ENCODE measurements at regions of chr11 and their contacts with region 1.

Region 1: GRCh38 chr11:72793425-72794367 is at the start of gene STARD10:
- DNase-seq: peak; percentile 98
- ATAC-seq: peak; percentile 94
- H3K4me3 ChIP-seq: peak within 1 kb of the TSS; percentile 60 to 98 (median 85)
- H3K4me3 Mint-ChIP-seq: peak within 1 kb of the TSS; percentile 99
- H3K27ac ChIP-seq: peak within 1 kb of the TSS; percentile 94 to 97
- H3K27ac Mint-ChIP-seq: peak within 1 kb of the TSS; percentile 100
- H3K4me1 ChIP-seq: peaks cover 19 to 28% of the 10 kb centered on the region in 2 donors
- H3K4me1 Mint-ChIP-seq: peaks cover 36% of the 10 kb centered on the region
- H3K27me3 ChIP-seq: no peaks in the 10 kb centered on the region
- H3K27me3 Mint-ChIP-seq: no peaks in the 10 kb centered on the region
- CTCF ChIP-seq: peak; percentile 94
- total RNA-seq, gene STARD10: 29.4 and 39.2 TPM in 2 replicates

Region 2: GRCh38 chr11:71934213-71934612 is 859.5 kb before region 1 on chr11:
- CTCF ChIA-PET with region 1: no interaction called
- POLR2A ChIA-PET with region 1: no interaction called
- intact Hi-C with region 1: no loop called
- DNase-seq: peak; percentile 76
- ATAC-seq: peak; percentile 84
- H3K4me3 ChIP-seq: no peak overlapping the region
- H3K4me3 Mint-ChIP-seq: peak overlapping the region; percentile 68
- H3K27ac ChIP-seq: peak overlapping the region; percentile 21 to 73
- H3K27ac Mint-ChIP-seq: peak overlapping the region; percentile 75
- H3K4me1 ChIP-seq: peaks cover 33 to 44% of the 10 kb centered on the region in 2 donors
- H3K4me1 Mint-ChIP-seq: peaks cover 53% of the 10 kb centered on the region
- H3K27me3 ChIP-seq: no peaks in the 10 kb centered on the region
- H3K27me3 Mint-ChIP-seq: no peaks in the 10 kb centered on the region
- CTCF ChIP-seq: no peak

Region 3: DNA sequence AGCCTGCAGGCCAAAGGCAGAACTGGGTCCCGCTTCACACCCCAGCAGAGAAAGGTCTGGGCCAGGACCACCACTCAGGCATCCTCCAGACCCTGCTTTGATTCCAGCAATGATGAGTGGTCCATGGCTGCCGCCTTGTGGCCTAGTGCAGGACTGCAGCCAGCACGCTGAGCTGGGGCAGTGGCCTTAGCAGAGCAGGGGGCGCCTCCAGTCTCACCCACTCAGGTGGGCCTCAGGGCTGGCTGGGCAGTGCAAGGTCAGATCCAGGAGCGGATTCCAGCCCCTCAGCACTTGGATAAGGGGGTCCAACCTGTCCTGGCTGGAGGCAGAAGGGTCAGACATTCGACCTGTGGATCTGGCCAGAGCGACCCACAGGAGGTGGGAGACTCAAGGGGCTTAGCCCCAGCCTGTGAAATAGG is 109.9 kb before region 1 on chr11:
- CTCF ChIA-PET with region 1: interaction called, 39 read pairs
- POLR2A ChIA-PET with region 1: no interaction called
- intact Hi-C with region 1: loop called (anchors 1 kb)
- DNase-seq: peak; percentile 76
- ATAC-seq: peak; percentile 74
- H3K4me3 ChIP-seq: no peak overlapping the region
- H3K4me3 Mint-ChIP-seq: no peak overlapping the region
- H3K27ac ChIP-seq: peak overlapping the region in 1 of 2 donors; percentile 11
- H3K27ac Mint-ChIP-seq: no peak overlapping the region
- H3K4me1 ChIP-seq: no peaks in the 10 kb centered on the region
- H3K4me1 Mint-ChIP-seq: peaks cover 6% of the 10 kb centered on the region
- H3K27me3 ChIP-seq: no peaks in the 10 kb centered on the region
- H3K27me3 Mint-ChIP-seq: no peaks in the 10 kb centered on the region
- CTCF ChIP-seq: peak; percentile 95

Region 4: DNA sequence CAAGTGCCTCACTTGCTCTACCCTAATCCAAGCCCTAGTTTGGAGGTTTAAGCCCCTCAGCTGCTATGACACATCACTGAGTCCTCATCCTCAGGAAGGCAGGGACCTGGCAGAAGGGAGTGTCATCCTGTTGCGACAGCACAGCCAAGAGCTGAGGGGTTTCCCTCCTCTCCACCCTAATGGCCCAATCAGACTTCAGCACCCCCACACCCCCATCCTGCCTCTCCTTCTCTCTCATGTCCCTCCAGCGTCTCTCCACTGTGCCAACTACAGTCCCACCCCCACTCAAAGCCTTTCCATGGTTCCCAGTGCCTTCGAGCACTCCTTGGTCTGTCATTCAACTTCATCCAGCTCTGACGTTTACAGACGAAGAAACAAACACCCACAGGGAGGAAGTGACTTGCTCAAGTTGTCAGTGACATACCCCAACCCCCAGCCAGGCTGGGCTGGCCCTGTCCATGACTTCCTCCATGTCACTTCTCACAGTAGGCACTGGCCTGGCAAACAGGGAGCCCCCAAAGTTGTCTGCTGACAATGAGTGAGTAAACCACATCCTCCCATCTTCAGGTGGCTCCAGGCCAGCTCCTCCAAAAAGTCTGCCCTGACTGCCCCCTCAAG is 57.1 kb before region 1 on chr11:
- CTCF ChIA-PET with region 1: interaction called, 390 read pairs
- POLR2A ChIA-PET with region 1: interaction called, 4 read pairs
- intact Hi-C with region 1: loop called (anchors 1 kb)
- DNase-seq: peak; percentile 87
- ATAC-seq: peak; percentile 42
- H3K4me3 ChIP-seq: peak overlapping the region in 4 of 5 experiments; percentile 13 to 67 (median 42)
- H3K4me3 Mint-ChIP-seq: peak overlapping the region; percentile 86
- H3K27ac ChIP-seq: peak overlapping the region; percentile 97 to 99
- H3K27ac Mint-ChIP-seq: peak overlapping the region; percentile 99
- H3K4me1 ChIP-seq: peaks cover 76 to 87% of the 10 kb centered on the region in 2 donors
- H3K4me1 Mint-ChIP-seq: peaks cover 83% of the 10 kb centered on the region
- H3K27me3 ChIP-seq: no peaks in the 10 kb centered on the region
- H3K27me3 Mint-ChIP-seq: no peaks in the 10 kb centered on the region
- CTCF ChIP-seq: no peak

Region 5: GRCh38 chr11:72752088-72752914 is 41.4 kb before region 1 on chr11 and contains the start of gene ARAP1:
- CTCF ChIA-PET with region 1: interaction called, 4 read pairs
- POLR2A ChIA-PET with region 1: interaction called, 4 read pairs
- intact Hi-C with region 1: loop called (anchors 1 kb)
- DNase-seq: peak; percentile 87
- ATAC-seq: peak; percentile 91
- H3K4me3 ChIP-seq: peak within 1 kb of the TSS; percentile 63 to 93 (median 82)
- H3K4me3 Mint-ChIP-seq: peak within 1 kb of the TSS; percentile 99
- H3K27ac ChIP-seq: peak within 1 kb of the TSS; percentile 65 to 79
- H3K27ac Mint-ChIP-seq: peak within 1 kb of the TSS; percentile 96
- H3K4me1 ChIP-seq: peaks cover 42 to 53% of the 10 kb centered on the region in 2 donors
- H3K4me1 Mint-ChIP-seq: peaks cover 45% of the 10 kb centered on the region
- H3K27me3 ChIP-seq: no peaks in the 10 kb centered on the region
- H3K27me3 Mint-ChIP-seq: no peaks in the 10 kb centered on the region
- CTCF ChIP-seq: peak; percentile 12
- total RNA-seq, gene ARAP1: 233 and 242 TPM in 2 replicates

Region 6: GRCh38 chr11:72807021-72807693 is 13.5 kb after region 1 on chr11:
- CTCF ChIA-PET with region 1: interaction called, 25 read pairs
- POLR2A ChIA-PET with region 1: interaction called, 12 read pairs
- intact Hi-C with region 1: no loop called
- DNase-seq: peak; percentile 41
- ATAC-seq: peak; percentile 12
- H3K4me3 ChIP-seq: no peak overlapping the region
- H3K4me3 Mint-ChIP-seq: no peak overlapping the region
- H3K27ac ChIP-seq: no peak overlapping the region
- H3K27ac Mint-ChIP-seq: peak overlapping the region; percentile 59
- H3K4me1 ChIP-seq: peaks cover 18 to 20% of the 10 kb centered on the region in 2 donors
- H3K4me1 Mint-ChIP-seq: peaks cover 32% of the 10 kb centered on the region
- H3K27me3 ChIP-seq: no peaks in the 10 kb centered on the region
- H3K27me3 Mint-ChIP-seq: no peaks in the 10 kb centered on the region
- CTCF ChIP-seq: no peak

Region 7: DNA sequence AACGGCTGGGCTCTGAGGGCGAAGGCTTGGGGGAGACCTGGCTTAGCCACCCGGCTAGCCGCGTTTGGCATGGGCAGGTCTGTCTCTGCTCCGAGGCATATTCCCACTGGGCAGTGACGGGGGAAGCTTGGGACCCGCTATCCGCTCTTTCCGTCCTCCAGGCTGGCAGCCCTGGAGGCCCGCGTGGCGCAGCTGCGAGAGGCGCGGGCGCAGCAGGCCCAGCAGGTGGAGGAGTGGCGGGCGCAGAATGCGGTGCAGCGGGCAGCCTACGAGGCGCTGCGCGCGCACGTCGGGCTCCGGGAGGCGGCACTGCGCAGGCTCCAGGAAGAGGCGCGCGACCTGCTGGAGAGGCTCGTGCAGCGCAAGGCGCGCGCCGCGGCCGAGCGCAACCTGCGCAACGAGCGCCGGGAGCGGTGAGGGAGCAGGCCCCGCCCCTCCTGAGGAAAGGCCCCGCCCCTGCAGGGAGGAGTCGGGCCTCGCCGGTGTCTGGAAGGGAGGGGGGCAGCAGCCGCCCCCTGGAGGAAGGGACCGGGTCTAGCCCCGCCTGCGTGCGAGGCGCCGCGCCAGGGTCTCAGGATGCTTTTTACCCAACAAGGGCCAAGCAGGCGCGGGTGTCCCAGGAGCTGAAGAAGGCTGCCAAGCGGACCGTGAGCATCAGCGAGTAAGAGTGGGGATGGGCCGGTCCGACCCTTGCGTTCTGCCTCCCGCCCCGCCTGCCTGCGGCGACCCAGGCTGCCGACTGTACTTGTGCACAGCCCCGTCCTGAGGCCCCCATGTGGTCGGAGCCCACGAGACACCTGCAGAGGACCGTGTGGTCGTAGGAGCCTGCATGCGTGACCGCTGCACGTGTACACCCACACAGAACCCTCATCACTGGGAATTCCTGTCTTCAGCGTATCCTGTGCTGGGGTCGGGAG is 28.4 kb after region 1 on chr11:
- CTCF ChIA-PET with region 1: interaction called, 5 read pairs
- POLR2A ChIA-PET with region 1: interaction called, 5 read pairs
- intact Hi-C with region 1: loop called (anchors 1 kb)
- DNase-seq: peak; percentile 90
- ATAC-seq: peak; percentile 84
- H3K4me3 ChIP-seq: peak overlapping the region in 3 of 5 experiments; percentile 29 to 44 (median 43)
- H3K4me3 Mint-ChIP-seq: peak overlapping the region; percentile 69
- H3K27ac ChIP-seq: peak overlapping the region; percentile 59 to 86
- H3K27ac Mint-ChIP-seq: peak overlapping the region; percentile 95
- H3K4me1 ChIP-seq: peaks cover 16 to 33% of the 10 kb centered on the region in 2 donors
- H3K4me1 Mint-ChIP-seq: peaks cover 52% of the 10 kb centered on the region
- H3K27me3 ChIP-seq: no peaks in the 10 kb centered on the region
- H3K27me3 Mint-ChIP-seq: no peaks in the 10 kb centered on the region
- CTCF ChIP-seq: peak; percentile 52

Region 8: GRCh38 chr11:73001615-73002014 is 207.9 kb after region 1 on chr11:
- CTCF ChIA-PET with region 1: no interaction called
- POLR2A ChIA-PET with region 1: no interaction called
- intact Hi-C with region 1: no loop called
- DNase-seq: no peak
- ATAC-seq: no peak
- H3K4me3 ChIP-seq: peak overlapping the region in 1 of 5 experiments; percentile 5
- H3K4me3 Mint-ChIP-seq: no peak overlapping the region
- H3K27ac ChIP-seq: peak overlapping the region; percentile 86 to 87
- H3K27ac Mint-ChIP-seq: peak overlapping the region; percentile 75
- H3K4me1 ChIP-seq: peaks cover 66 to 70% of the 10 kb centered on the region in 2 donors
- H3K4me1 Mint-ChIP-seq: peaks cover 70% of the 10 kb centered on the region
- H3K27me3 ChIP-seq: no peaks in the 10 kb centered on the region
- H3K27me3 Mint-ChIP-seq: no peaks in the 10 kb centered on the region
- CTCF ChIP-seq: no peak